Ovary (tissue), 10 donors: ENCODE measurements at regions of chr12 and their contacts with region 1.

Region 1: DNA sequence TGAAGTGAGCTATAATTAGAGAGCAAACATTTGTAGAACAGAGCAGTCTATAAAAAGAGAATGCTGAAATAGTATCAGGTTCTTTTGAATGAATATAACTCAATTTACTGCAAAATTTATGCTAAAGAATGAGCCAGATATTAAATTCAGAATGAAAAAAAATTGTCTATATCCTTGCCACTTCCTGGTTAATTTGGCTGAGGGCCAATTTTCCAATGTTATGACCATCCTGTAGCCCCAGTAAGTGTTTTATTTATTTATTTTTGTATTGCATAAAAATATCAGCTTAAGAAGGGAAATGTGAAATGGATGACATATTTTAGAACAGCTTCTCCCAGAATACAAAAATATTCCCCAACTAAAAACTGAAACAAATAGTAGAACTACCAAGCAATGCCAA is 263.4 kb downstream of the SOX5 start:
- DNase-seq: no peak
- H3K4me3 ChIP-seq: no peak overlapping the region
- H3K27ac ChIP-seq: no peak overlapping the region
- H3K4me1 ChIP-seq: no peaks in the 10 kb centered on the region
- H3K27me3 ChIP-seq: no peaks in the 10 kb centered on the region
- CTCF ChIP-seq: no peak
- EP300 ChIP-seq: no peak
- POLR2A ChIP-seq: no peak

Region 2: GRCh38 chr12:22692964-22693555 is 993.0 kb before region 1 on chr12:
- intact Hi-C with region 1: loop called in 1 of 4 experiments (anchors 10 kb)
- DNase-seq: peak in 1 of 5 donors; percentile 20
- H3K4me3 ChIP-seq: no peak overlapping the region
- H3K27ac ChIP-seq: no peak overlapping the region
- H3K4me1 ChIP-seq: no peaks in the 10 kb centered on the region
- H3K27me3 ChIP-seq: no peaks in the 10 kb centered on the region
- CTCF ChIP-seq: no peak
- EP300 ChIP-seq: no peak
- POLR2A ChIP-seq: no peak